Activated CD8-positive, alpha-beta T cell treated with anti-CD3 and anti-CD28 coated beads, Interleukin-2, amount 10 ng/mL, durations not matched to agents 7 days and 5 days (primary cell): ENCODE measurements at regions of chr15 and their contacts with region 1.

Region 1: GRCh38 chr15:89630974-89631901 is 24.0 kb downstream of the KIF7 start:
- DNase-seq: no peak
- ATAC-seq: no peak
- H3K4me3 Mint-ChIP-seq: no peak overlapping the region
- H3K27ac Mint-ChIP-seq: no peak overlapping the region
- H3K4me1 Mint-ChIP-seq: no peaks in the 10 kb centered on the region
- H3K27me3 Mint-ChIP-seq: no peaks in the 10 kb centered on the region

Region 2: GRCh38 chr15:89615135-89615534 is 16.1 kb before region 1 on chr15:
- CTCF ChIA-PET with region 1: no interaction called
- POLR2A ChIA-PET with region 1: no interaction called
- DNase-seq: no peak
- ATAC-seq: no peak
- H3K4me3 Mint-ChIP-seq: no peak overlapping the region
- H3K27ac Mint-ChIP-seq: no peak overlapping the region
- H3K4me1 Mint-ChIP-seq: peaks cover 2% of the 10 kb centered on the region
- H3K27me3 Mint-ChIP-seq: no peaks in the 10 kb centered on the region

Region 3: GRCh38 chr15:89647191-89647851 is 16.1 kb after region 1 on chr15:
- CTCF ChIA-PET with region 1: interaction called, 10 read pairs
- POLR2A ChIA-PET with region 1: no interaction called
- DNase-seq: peak; percentile 74
- ATAC-seq: peak; percentile 72
- H3K4me3 Mint-ChIP-seq: no peak overlapping the region
- H3K27ac Mint-ChIP-seq: no peak overlapping the region
- H3K4me1 Mint-ChIP-seq: peaks cover 4% of the 10 kb centered on the region
- H3K27me3 Mint-ChIP-seq: peaks cover 3% of the 10 kb centered on the region